Esophagus squamous epithelium (tissue), 5 donors: ENCODE measurements at regions of chr18 and their contacts with region 1.

Region 1: DNA sequence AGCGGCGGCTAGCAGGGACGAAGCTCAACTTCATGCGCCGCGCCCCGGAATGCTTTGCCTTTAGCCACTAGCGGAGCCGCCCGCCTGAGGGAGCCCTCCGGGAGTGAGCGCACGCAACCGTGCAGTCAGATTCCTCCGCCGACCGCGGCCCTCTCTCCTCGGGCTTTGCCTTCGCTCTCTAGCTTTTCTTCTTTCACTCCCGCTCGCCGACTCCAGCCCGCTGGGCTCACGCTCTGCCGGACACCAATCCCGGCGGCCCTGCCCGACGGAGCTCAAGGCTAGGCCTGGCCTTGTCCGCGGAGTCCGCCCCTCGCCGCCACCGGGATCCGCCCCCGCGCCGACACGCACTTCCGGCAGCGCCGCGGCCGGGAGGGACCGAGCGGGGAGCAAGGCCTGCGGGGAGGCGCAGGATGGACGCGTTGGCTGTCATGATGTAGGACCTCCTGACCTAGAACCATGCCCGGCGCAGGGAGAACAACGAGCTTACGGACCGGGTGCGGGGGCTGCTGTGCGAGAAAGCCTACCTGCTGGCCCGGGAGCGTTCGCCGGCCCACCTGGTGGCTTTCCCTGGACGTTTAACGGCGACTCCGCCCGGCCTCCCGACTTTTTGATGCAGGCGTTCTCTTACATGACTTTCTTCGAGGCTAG is 40.8 kb upstream of the AKAIN1 start:
- DNase-seq: peak; percentile 48
- H3K4me3 ChIP-seq: peak overlapping the region; percentile 74 to 95 (median 80)
- H3K27ac ChIP-seq: peak overlapping the region; percentile 90 to 99 (median 96)
- H3K4me1 ChIP-seq: peaks cover 0 to 40% (median 25%) of the 10 kb centered on the region in 3 donors
- H3K27me3 ChIP-seq: no peaks in the 10 kb centered on the region
- CTCF ChIP-seq: peak in 2 of 6 experiments; percentile 34 to 44
- POLR2A ChIP-seq: peak in 3 of 4 donors; percentile 42 to 78 (median 44)

Region 2: GRCh38 chr18:5106730-5107129 is 131.1 kb before region 1 on chr18:
- intact Hi-C with region 1: no loop called
- DNase-seq: no peak
- H3K4me3 ChIP-seq: no peak overlapping the region
- H3K27ac ChIP-seq: no peak overlapping the region
- H3K4me1 ChIP-seq: no peaks in the 10 kb centered on the region
- H3K27me3 ChIP-seq: no peaks in the 10 kb centered on the region
- CTCF ChIP-seq: no peak
- POLR2A ChIP-seq: no peak

Region 3: DNA sequence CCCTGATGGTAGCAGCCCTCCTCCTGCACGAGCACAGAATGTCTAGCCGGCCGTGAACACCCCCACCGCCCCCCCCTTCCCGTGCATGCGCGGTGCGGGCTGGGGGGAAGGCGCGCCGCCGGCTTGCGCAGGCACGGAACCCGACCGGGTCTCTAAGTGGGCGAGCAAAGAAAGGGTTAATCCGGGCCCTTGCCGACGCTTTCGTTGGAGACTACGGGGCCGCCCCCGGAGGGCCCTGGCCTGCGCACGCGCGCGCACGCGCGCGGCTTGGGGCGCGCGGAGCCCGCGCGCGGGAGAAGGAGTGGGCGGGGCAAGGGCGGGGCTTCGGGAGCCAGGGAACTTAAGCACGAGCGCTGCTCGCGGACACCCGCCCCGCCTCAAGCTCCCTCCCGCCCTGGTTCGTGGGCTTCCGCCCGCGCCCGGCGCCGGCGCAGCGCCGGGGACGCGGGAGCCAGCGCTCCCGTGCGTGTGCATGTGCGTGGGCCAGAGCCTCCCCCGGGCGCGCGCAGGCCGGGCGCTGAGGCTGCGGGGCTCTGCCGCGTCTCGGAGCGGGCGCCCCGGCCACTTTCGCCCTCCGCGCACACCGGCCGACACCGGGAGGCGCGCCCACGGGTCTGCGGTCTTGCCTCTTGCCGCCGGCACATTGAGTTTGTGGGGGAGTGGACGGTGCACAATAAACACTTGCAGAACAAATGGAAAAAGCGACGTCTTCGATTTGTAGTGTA is 58.3 kb after region 1 on chr18:
- intact Hi-C with region 1: loop called (anchors 5 kb)
- DNase-seq: peak; percentile 81
- H3K4me3 ChIP-seq: peak overlapping the region; percentile 80 to 99 (median 91)
- H3K27ac ChIP-seq: peak overlapping the region; percentile 94 to 100 (median 98)
- H3K4me1 ChIP-seq: peaks cover 3 to 26% (median 5%) of the 10 kb centered on the region in 3 donors
- H3K27me3 ChIP-seq: peaks cover 0 to 5% (median 0%) of the 10 kb centered on the region in 4 donors
- CTCF ChIP-seq: no peak
- POLR2A ChIP-seq: peak in 2 of 4 donors; percentile 53 to 66

Region 4: GRCh38 chr18:5678779-5679406 is 441.0 kb after region 1 on chr18:
- intact Hi-C with region 1: no loop called
- DNase-seq: no peak
- H3K4me3 ChIP-seq: no peak overlapping the region
- H3K27ac ChIP-seq: no peak overlapping the region
- H3K4me1 ChIP-seq: no peaks in the 10 kb centered on the region
- H3K27me3 ChIP-seq: no peaks in the 10 kb centered on the region
- CTCF ChIP-seq: no peak
- POLR2A ChIP-seq: no peak